ENCODE measurements at regions of chr1 and their contacts with region 1.

Region 1: GRCh38 chr1:147504801-147505311 is 36.4 kb upstream of the BCL9 start:
- DNase-seq: peak; percentile 15
- ATAC-seq: peak; percentile 81
- H3K4me3 ChIP-seq: no peak overlapping the region
- H3K27ac ChIP-seq: no peak overlapping the region
- H3K4me1 ChIP-seq: peaks cover 3% of the 10 kb centered on the region; the same call in 1 of the 2 replicates
- H3K27me3 ChIP-seq: peaks cover 4% of the 10 kb centered on the region; the same call in 1 of the 2 replicates
- CTCF ChIP-seq: no peak
- POLR2A ChIP-seq: no peak
- RAD21 ChIP-seq: no peak

Region 2: DNA sequence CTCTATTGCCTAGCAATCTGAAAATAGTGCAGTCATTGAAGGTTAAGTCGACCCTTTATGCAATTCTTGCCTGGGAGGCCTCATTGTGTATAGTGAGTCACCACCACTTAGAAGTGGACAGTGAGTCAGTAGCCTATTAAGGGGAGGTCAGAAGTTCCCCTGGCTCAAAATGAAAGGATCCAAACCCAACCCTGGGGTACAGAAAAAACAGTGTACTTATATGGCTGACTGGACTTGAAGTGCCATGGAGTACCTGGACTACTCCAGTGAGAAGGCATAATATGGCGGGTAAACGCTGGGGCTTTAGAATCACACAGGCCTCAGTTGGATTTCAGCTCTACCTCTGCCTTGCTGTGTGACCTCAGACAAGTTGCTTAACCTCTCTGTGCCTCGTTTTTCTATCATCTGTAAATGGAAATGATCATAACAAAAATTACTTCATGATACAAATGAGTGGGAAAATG is 34.3 kb after region 1 on chr1:
- CTCF ChIA-PET with region 1: no interaction called
- POLR2A ChIA-PET with region 1: no interaction called
- dilution Hi-C with region 1: no loop called
- in situ Hi-C with region 1: no loop called
- intact Hi-C with region 1: loop called (anchors 2 kb)
- DNase-seq: peak; percentile 98
- ATAC-seq: peak; percentile 55
- H3K4me3 ChIP-seq: no peak overlapping the region
- H3K27ac ChIP-seq: peak overlapping the region; percentile 58; the same call in 1 of the 2 replicates
- H3K4me1 ChIP-seq: peaks cover 11% of the 10 kb centered on the region
- H3K27me3 ChIP-seq: no peaks in the 10 kb centered on the region
- CTCF ChIP-seq: no peak
- POLR2A ChIP-seq: no peak
- RAD21 ChIP-seq: no peak

Region 3: GRCh38 chr1:147890177-147890790 is 385.4 kb after region 1 on chr1:
- CTCF ChIA-PET with region 1: no interaction called
- POLR2A ChIA-PET with region 1: no interaction called
- dilution Hi-C with region 1: no loop called
- in situ Hi-C with region 1: no loop called
- intact Hi-C with region 1: no loop called
- DNase-seq: peak; percentile 29
- ATAC-seq: peak; percentile 77
- H3K4me3 ChIP-seq: no peak overlapping the region
- H3K27ac ChIP-seq: no peak overlapping the region
- H3K4me1 ChIP-seq: no peaks in the 10 kb centered on the region
- H3K27me3 ChIP-seq: peaks cover 4% of the 10 kb centered on the region
- CTCF ChIP-seq: peak; percentile 34
- POLR2A ChIP-seq: no peak
- RAD21 ChIP-seq: peak; percentile 46